Heart right ventricle (tissue), 16 donors: ENCODE measurements at regions of chr19 and their contacts with region 1.

Region 1: DNA sequence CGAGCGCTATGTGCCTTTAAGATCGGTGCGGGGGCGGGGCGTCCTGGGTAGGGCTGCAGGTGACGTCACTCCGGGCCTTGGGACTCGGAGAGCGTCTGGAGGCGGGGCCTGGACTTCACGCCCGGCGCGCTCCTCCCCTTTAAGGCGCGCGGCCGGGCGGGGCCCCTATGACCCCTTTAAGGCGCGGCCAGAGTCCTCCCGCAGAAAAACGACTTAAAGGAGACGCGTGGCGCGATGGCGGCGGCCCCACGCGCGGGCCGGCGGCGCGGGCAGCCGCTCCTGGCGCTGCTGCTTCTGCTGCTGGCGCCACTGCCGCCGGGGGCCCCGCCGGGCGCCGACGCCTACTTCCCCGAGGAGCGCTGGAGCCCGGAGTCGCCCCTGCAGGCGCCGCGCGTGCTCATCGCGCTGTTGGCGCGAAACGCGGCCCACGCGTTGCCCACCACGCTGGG is at the start of gene COLGALT1:
- DNase-seq: peak; percentile 98 to 99
- ATAC-seq: peak; percentile 95 to 98 (median 96)
- H3K4me3 ChIP-seq: peak within 1 kb of the TSS; percentile 73 to 95 (median 86)
- H3K27ac ChIP-seq: peak within 1 kb of the TSS; percentile 55 to 94 (median 91)
- H3K4me1 ChIP-seq: peaks cover 8 to 73% (median 50%) of the 10 kb centered on the region in 9 donors
- H3K27me3 ChIP-seq: no peaks in the 10 kb centered on the region
- CTCF ChIP-seq: no peak
- total RNA-seq, gene COLGALT1: 19.7 to 73.8 (median 29.3) TPM

Region 2: DNA sequence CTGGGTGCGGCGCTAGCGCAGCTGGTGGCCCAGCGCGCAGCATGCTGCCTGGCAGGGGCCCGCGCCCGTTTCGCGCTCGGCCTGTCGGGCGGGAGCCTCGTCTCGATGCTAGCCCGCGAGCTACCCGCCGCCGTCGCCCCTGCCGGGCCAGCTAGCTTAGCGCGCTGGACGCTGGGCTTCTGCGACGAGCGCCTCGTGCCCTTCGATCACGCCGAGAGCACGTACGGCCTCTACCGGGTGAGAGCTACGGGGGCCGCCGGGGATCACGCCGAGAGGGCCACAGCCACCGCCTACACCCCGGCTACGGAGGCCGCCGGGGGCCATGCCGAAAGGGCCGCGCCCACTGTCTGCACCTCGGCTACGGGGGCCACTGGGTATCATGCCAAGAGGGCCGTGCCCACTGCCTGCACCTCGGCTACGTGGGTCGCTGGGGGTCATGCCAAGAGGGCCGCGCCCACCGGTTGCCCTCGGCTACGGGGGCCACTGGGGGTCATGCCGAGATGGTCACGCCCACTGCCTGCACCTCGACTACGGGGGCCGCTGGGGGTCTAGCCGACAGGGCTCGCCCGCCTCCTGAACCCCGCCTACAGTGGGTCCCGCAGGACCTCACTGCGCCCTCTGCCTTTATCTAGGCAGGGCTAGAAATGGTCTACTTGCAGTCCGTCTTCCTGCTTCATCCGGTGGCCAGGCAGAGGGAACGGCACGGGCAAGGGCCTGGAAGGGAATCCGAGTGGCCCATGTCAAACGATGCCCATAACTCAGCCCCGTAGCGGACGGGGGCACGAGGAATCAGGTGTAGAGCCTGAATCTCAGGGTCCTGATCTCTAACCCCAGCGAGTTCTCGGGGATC is 43.6 kb before region 1 on chr19:
- intact Hi-C with region 1: loop called in 3 of 10 experiments (anchors 1 to 10 kb)
- DNase-seq: peak; percentile 90 to 93
- ATAC-seq: peak; percentile 84 to 89 (median 85)
- H3K4me3 ChIP-seq: peak overlapping the region; percentile 69 to 98 (median 92)
- H3K27ac ChIP-seq: peak overlapping the region; percentile 96 to 100 (median 100)
- H3K4me1 ChIP-seq: peaks cover 4 to 46% (median 26%) of the 10 kb centered on the region in 9 donors
- H3K27me3 ChIP-seq: no peaks in the 10 kb centered on the region
- CTCF ChIP-seq: peak in 6 of 9 donors; percentile 26 to 53 (median 42)

Region 3: GRCh38 chr19:17530586-17530985 is 24.9 kb before region 1 on chr19:
- intact Hi-C with region 1: no loop called
- DNase-seq: no peak
- ATAC-seq: no peak
- H3K4me3 ChIP-seq: no peak overlapping the region
- H3K27ac ChIP-seq: no peak overlapping the region
- H3K4me1 ChIP-seq: no peaks in the 10 kb centered on the region
- H3K27me3 ChIP-seq: peaks cover 0 to 35% (median 7%) of the 10 kb centered on the region in 7 donors
- CTCF ChIP-seq: no peak